ENCODE measurements at regions of chr6 and their contacts with region 1.

Region 1: GRCh38 chr6:16690608-16691198 is 70.6 kb downstream of the ATXN1 start:
- DNase-seq: peak; percentile 77
- ATAC-seq: peak; percentile 70
- H3K4me3 Mint-ChIP-seq: peak overlapping the region; percentile 17
- H3K27ac Mint-ChIP-seq: peak overlapping the region; percentile 92
- H3K4me1 Mint-ChIP-seq: peaks cover 86% of the 10 kb centered on the region
- H3K27me3 Mint-ChIP-seq: no peaks in the 10 kb centered on the region
- CTCF ChIP-seq: no peak

Region 2: GRCh38 chr6:16725145-16725864 is 34.6 kb after region 1 on chr6:
- CTCF ChIA-PET with region 1: interaction called, 3 read pairs
- POLR2A ChIA-PET with region 1: interaction called, 3 read pairs
- intact Hi-C with region 1: loop called (anchors 5 kb)
- DNase-seq: no peak
- ATAC-seq: no peak
- H3K4me3 Mint-ChIP-seq: no peak overlapping the region
- H3K27ac Mint-ChIP-seq: peak overlapping the region; percentile 11
- H3K4me1 Mint-ChIP-seq: peaks cover 52% of the 10 kb centered on the region
- H3K27me3 Mint-ChIP-seq: no peaks in the 10 kb centered on the region
- CTCF ChIP-seq: no peak

Region 3: DNA sequence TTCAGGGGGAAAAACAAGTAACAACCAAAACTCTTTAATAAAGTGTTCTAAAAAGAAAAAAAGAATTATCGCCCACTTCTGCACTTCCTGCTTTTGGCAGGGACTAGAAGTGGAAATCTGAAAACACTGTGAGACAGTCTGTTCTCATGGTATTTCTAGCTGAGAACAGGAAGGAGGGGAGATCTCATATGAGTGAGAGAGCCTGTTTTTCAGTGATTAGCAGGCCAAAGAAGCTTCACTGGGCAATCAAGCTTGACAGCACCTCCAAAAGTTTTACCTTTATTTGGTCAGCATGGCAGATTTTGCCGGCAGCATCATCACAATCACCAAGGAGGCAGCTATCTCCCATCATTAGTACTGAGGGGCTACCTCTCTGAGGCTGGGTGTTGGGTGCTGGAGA is 150.0 kb after region 1 on chr6:
- CTCF ChIA-PET with region 1: no interaction called
- POLR2A ChIA-PET with region 1: no interaction called
- intact Hi-C with region 1: no loop called
- DNase-seq: no peak
- ATAC-seq: no peak
- H3K4me3 Mint-ChIP-seq: no peak overlapping the region
- H3K27ac Mint-ChIP-seq: no peak overlapping the region
- H3K4me1 Mint-ChIP-seq: peaks cover 38% of the 10 kb centered on the region
- H3K27me3 Mint-ChIP-seq: no peaks in the 10 kb centered on the region
- CTCF ChIP-seq: no peak

Measured in activated CD8-positive, alpha-beta T cell treated with anti-CD3 and anti-CD28 coated beads for 36 hours (primary cell).